ENCODE measurements at regions of chr22 and their contacts with region 1.

Region 1: DNA sequence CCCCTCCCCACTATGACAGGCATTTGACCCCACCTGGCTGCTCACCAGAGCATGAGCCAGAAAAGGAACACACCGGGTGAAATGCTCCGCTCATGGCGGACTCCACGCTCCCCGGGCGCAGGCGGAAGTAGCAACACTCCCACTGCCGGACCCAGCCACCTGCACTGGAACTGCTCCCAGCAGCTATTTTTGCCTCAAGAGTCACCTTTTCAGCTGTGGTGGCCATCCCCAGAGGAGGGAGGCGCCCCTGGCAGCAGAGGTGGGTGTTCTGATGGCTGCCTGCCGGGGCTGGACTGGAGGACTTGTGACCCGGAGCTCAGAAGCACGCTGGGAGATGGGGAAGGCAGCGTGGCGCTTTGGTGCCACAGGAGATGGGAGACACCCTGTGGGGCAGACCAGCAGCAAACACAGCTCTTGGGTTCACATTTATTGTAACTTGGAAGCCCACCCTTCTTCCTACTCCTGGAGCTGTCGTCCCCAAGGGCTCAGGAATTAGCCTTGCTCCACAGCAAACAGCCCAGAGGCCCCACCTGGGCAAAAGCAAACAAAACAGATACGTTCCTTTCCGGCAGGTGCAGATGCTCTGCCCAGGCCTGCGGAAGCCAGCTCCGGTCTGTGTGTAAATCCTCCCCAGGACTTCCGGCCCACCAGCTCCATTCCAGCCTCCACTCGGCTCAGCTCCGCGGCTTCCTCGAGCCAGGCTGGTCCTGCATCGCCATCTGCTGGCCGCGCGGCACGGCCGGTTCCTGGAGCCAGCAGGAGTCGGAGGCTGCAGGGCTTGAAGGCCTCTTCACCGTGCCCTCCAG is 3.7 kb downstream of the RPS19BP1 start:
- DNase-seq: peak; percentile 94
- ATAC-seq: peak; percentile 8
- H3K4me3 Mint-ChIP-seq: no peak overlapping the region
- H3K27ac Mint-ChIP-seq: no peak overlapping the region
- H3K4me1 Mint-ChIP-seq: peaks cover 65% of the 10 kb centered on the region
- H3K27me3 Mint-ChIP-seq: no peaks in the 10 kb centered on the region
- CTCF ChIP-seq: peak; percentile 76

Region 2: DNA sequence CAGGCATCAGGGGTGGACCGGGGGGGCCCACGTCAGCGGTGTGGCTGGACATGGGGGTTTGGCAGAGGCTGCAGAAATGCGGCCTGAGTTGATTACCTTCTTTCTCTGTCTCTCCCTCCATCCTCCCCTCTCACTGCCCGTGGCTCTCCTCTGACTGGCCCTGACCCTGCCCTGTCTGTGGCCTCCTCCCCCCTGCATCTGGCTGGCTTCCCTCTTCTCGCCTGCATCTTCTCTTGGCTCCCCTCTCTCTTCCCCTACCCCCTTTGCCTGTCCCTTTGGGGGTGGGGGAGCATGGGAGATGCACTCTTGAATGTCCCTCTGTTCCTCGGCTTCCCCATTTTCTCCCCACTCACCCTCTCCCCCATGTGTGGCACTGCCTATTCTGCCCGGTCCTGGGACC is 153.2 kb before region 1 on chr22:
- CTCF ChIA-PET with region 1: no interaction called
- POLR2A ChIA-PET with region 1: no interaction called
- DNase-seq: no peak
- ATAC-seq: no peak
- H3K4me3 Mint-ChIP-seq: no peak overlapping the region
- H3K27ac Mint-ChIP-seq: no peak overlapping the region
- H3K4me1 Mint-ChIP-seq: peaks cover 4% of the 10 kb centered on the region; the same call in 1 of the 2 replicates
- H3K27me3 Mint-ChIP-seq: no peaks in the 10 kb centered on the region
- CTCF ChIP-seq: no peak

Region 3: GRCh38 chr22:39395936-39396796 is 132.7 kb before region 1 on chr22:
- CTCF ChIA-PET with region 1: interaction called, 19 read pairs
- POLR2A ChIA-PET with region 1: interaction called, 5 read pairs
- DNase-seq: no peak
- ATAC-seq: no peak
- H3K4me3 Mint-ChIP-seq: no peak overlapping the region
- H3K27ac Mint-ChIP-seq: no peak overlapping the region
- H3K4me1 Mint-ChIP-seq: peaks cover 7% of the 10 kb centered on the region
- H3K27me3 Mint-ChIP-seq: peaks cover 2% of the 10 kb centered on the region; the same call in 1 of the 2 replicates
- CTCF ChIP-seq: no peak

Region 4: GRCh38 chr22:39471381-39472141 is 57.3 kb before region 1 on chr22:
- CTCF ChIA-PET with region 1: interaction called, 13 read pairs
- POLR2A ChIA-PET with region 1: no interaction called
- DNase-seq: no peak
- ATAC-seq: peak; percentile 14
- H3K4me3 Mint-ChIP-seq: no peak overlapping the region
- H3K27ac Mint-ChIP-seq: peak overlapping the region; percentile 85
- H3K4me1 Mint-ChIP-seq: peaks cover 68% of the 10 kb centered on the region
- H3K27me3 Mint-ChIP-seq: no peaks in the 10 kb centered on the region
- CTCF ChIP-seq: no peak

Region 5: DNA sequence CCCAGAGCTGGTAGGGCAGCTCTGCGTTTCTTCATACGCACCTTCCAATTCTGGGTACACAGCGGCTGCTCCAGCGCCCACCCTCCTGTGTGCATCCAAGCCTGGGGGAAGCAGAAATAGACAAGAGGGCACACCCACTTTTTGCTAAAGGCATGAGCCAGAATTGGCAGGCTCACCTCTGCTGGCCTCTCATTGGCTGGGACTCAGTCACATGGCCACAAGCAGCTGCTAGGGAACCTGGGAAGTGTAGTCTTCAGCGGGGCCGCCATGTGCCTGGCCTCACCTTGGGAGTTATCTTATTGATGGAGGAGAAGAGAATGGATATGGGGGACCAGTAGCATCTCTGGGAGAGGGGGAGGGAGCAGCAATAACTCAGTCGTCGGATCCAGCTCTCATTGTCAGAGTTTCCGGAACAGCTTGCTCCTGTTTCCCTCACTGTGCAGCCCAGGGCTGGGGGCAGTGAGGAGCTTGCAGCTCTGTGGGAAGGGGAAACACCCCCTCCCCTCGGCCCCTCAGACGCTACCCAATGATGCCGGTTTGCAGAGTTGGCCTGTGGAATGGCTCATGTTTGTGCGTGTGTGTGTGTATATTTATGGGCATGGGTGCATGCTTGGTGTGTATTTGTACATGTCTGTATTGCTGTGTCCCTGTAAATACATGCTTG is 38.6 kb before region 1 on chr22:
- CTCF ChIA-PET with region 1: interaction called, 29 read pairs
- POLR2A ChIA-PET with region 1: no interaction called
- DNase-seq: peak; percentile 84
- ATAC-seq: peak; percentile 96
- H3K4me3 Mint-ChIP-seq: peak overlapping the region; percentile 38
- H3K27ac Mint-ChIP-seq: no peak overlapping the region
- H3K4me1 Mint-ChIP-seq: peaks cover 8% of the 10 kb centered on the region
- H3K27me3 Mint-ChIP-seq: peaks cover 17% of the 10 kb centered on the region
- CTCF ChIP-seq: no peak

Region 6: GRCh38 chr22:39502109-39502788 is 26.6 kb before region 1 on chr22 and contains the start of gene MIEF1:
- CTCF ChIA-PET with region 1: interaction called, 45 read pairs
- POLR2A ChIA-PET with region 1: interaction called, 8 read pairs
- DNase-seq: peak; percentile 96
- ATAC-seq: peak; percentile 97
- H3K4me3 Mint-ChIP-seq: peak within 1 kb of the TSS; percentile 97
- H3K27ac Mint-ChIP-seq: peak within 1 kb of the TSS; percentile 97
- H3K4me1 Mint-ChIP-seq: peaks cover 13% of the 10 kb centered on the region
- H3K27me3 Mint-ChIP-seq: peaks cover 89% of the 10 kb centered on the region
- CTCF ChIP-seq: no peak
- total RNA-seq, gene MIEF1: 31.5 to 38.7 TPM (median 31.9 TPM) in 3 replicates

Region 7: GRCh38 chr22:39583066-39583667 is 54.3 kb after region 1 on chr22:
- CTCF ChIA-PET with region 1: no interaction called
- POLR2A ChIA-PET with region 1: no interaction called
- DNase-seq: no peak
- ATAC-seq: no peak
- H3K4me3 Mint-ChIP-seq: no peak overlapping the region
- H3K27ac Mint-ChIP-seq: no peak overlapping the region
- H3K4me1 Mint-ChIP-seq: peaks cover 12% of the 10 kb centered on the region
- H3K27me3 Mint-ChIP-seq: peaks cover 3% of the 10 kb centered on the region
- CTCF ChIP-seq: no peak

Region 8: GRCh38 chr22:39600491-39601179 is 71.8 kb after region 1 on chr22:
- CTCF ChIA-PET with region 1: no interaction called
- POLR2A ChIA-PET with region 1: no interaction called
- DNase-seq: no peak
- ATAC-seq: no peak
- H3K4me3 Mint-ChIP-seq: no peak overlapping the region
- H3K27ac Mint-ChIP-seq: no peak overlapping the region
- H3K4me1 Mint-ChIP-seq: peaks cover 24% of the 10 kb centered on the region
- H3K27me3 Mint-ChIP-seq: peaks cover 44% of the 10 kb centered on the region
- CTCF ChIP-seq: no peak